CD8-positive, alpha-beta T cell (primary cell): ENCODE measurements at regions of chr17 and their contacts with region 1.

Region 1: DNA sequence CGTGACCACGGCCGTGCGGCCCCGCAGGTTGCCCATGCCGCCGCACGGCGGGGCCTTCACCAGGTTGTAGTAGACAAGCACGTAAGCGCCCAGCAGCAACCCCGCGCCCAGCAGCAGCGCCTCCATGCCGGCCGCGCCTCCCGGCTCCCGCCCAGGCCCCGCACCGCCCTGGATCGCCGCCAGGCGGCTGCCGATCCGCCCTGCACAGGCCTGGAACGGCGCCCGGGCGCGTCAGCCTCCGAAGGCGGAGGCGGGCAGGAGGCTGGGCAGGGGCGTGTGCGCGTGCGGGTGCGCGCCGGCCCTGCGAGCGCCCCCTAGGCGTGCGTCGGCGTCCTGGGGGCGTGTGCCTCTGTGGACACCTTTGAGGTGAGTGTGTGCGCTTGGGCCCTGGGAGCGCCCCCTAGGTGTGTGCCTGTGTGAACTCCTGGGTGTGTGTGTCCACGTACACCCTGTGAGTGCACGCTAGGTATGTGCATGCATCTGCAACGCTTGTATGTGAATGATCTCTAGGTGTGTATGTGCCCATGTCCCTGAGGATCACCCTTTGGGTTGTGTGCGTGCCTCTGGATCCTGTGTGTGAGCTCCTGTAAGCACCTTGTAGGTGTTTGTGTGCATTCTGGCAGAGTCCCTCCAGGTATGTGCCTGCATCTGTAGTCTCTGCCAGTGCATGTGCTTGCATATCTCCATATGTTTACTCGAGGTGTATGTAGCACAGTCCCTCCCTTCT is at the start of gene DHRS13:
- DNase-seq: peak; percentile 87 to 98 (median 95)
- ATAC-seq: peak; percentile 93
- H3K4me3 ChIP-seq: peak within 1 kb of the TSS; percentile 71 to 72
- H3K4me3 Mint-ChIP-seq: peak within 1 kb of the TSS; percentile 93
- H3K27ac ChIP-seq: peak within 1 kb of the TSS; percentile 61 to 62
- H3K27ac Mint-ChIP-seq: peak within 1 kb of the TSS; percentile 90
- H3K4me1 ChIP-seq: peaks cover 31% of the 10 kb centered on the region
- H3K4me1 Mint-ChIP-seq: peaks cover 33% of the 10 kb centered on the region
- H3K27me3 ChIP-seq: no peaks in the 10 kb centered on the region
- H3K27me3 Mint-ChIP-seq: no peaks in the 10 kb centered on the region
- CTCF ChIP-seq: peak; percentile 100
- total RNA-seq, gene DHRS13: 27.3 to 30.9 TPM

Region 2: GRCh38 chr17:28684963-28685362 is 218.0 kb before region 1 on chr17:
- CTCF ChIA-PET with region 1: no interaction called
- POLR2A ChIA-PET with region 1: no interaction called
- intact Hi-C with region 1: no loop called
- DNase-seq: no peak
- ATAC-seq: no peak
- H3K4me3 ChIP-seq: no peak overlapping the region
- H3K4me3 Mint-ChIP-seq: no peak overlapping the region
- H3K27ac ChIP-seq: no peak overlapping the region
- H3K27ac Mint-ChIP-seq: no peak overlapping the region
- H3K4me1 ChIP-seq: no peaks in the 10 kb centered on the region
- H3K4me1 Mint-ChIP-seq: no peaks in the 10 kb centered on the region
- H3K27me3 ChIP-seq: no peaks in the 10 kb centered on the region
- H3K27me3 Mint-ChIP-seq: no peaks in the 10 kb centered on the region
- CTCF ChIP-seq: no peak

Region 3: GRCh38 chr17:28717578-28718333 is 185.2 kb before region 1 on chr17 and contains the start of gene RAB34:
- CTCF ChIA-PET with region 1: interaction called, 5 read pairs
- POLR2A ChIA-PET with region 1: interaction called, 9 read pairs
- intact Hi-C with region 1: loop called in 1 of 2 experiments (anchors 2 kb)
- DNase-seq: peak in 4 of 9 experiments; percentile 22 to 53 (median 33)
- ATAC-seq: no peak
- H3K4me3 ChIP-seq: no peak within 1 kb of the TSS
- H3K4me3 Mint-ChIP-seq: peak within 1 kb of the TSS; percentile 59
- H3K27ac ChIP-seq: no peak within 1 kb of the TSS
- H3K27ac Mint-ChIP-seq: peak within 1 kb of the TSS; percentile 55
- H3K4me1 ChIP-seq: peaks cover 28% of the 10 kb centered on the region
- H3K4me1 Mint-ChIP-seq: peaks cover 39% of the 10 kb centered on the region
- H3K27me3 ChIP-seq: peaks cover 0 to 12% of the 10 kb centered on the region in 2 experiments
- H3K27me3 Mint-ChIP-seq: peaks cover 16% of the 10 kb centered on the region
- CTCF ChIP-seq: no peak
- total RNA-seq, gene RAB34: 13.9 to 14.1 TPM

Region 4: GRCh38 chr17:28842282-28843012 is 60.5 kb before region 1 on chr17 and contains the start of gene FAM222B:
- CTCF ChIA-PET with region 1: interaction called, 8 read pairs
- POLR2A ChIA-PET with region 1: interaction called, 11 read pairs
- intact Hi-C with region 1: loop called (anchors 1 kb)
- DNase-seq: peak; percentile 68 to 94 (median 83)
- ATAC-seq: peak; percentile 98
- H3K4me3 ChIP-seq: peak within 1 kb of the TSS; percentile 62 to 91
- H3K4me3 Mint-ChIP-seq: peak within 1 kb of the TSS; percentile 97
- H3K27ac ChIP-seq: peak within 1 kb of the TSS; percentile 65 to 79
- H3K27ac Mint-ChIP-seq: peak within 1 kb of the TSS; percentile 94
- H3K4me1 ChIP-seq: peaks cover 16% of the 10 kb centered on the region
- H3K4me1 Mint-ChIP-seq: peaks cover 25% of the 10 kb centered on the region
- H3K27me3 ChIP-seq: no peaks in the 10 kb centered on the region
- H3K27me3 Mint-ChIP-seq: no peaks in the 10 kb centered on the region
- CTCF ChIP-seq: no peak
- total RNA-seq, gene FAM222B: 20.2 to 20.6 TPM

Region 5: GRCh38 chr17:28854457-28855350 is 48.3 kb before region 1 on chr17 and contains the start of gene ERAL1:
- CTCF ChIA-PET with region 1: interaction called, 7 read pairs
- POLR2A ChIA-PET with region 1: interaction called, 5 read pairs
- intact Hi-C with region 1: loop called (anchors 1 to 2 kb)
- DNase-seq: peak; percentile 62 to 90 (median 84)
- ATAC-seq: peak; percentile 99
- H3K4me3 ChIP-seq: peak within 1 kb of the TSS; percentile 75 to 96
- H3K4me3 Mint-ChIP-seq: peak within 1 kb of the TSS; percentile 95
- H3K27ac ChIP-seq: peak within 1 kb of the TSS; percentile 61 to 74
- H3K27ac Mint-ChIP-seq: peak within 1 kb of the TSS; percentile 90
- H3K4me1 ChIP-seq: peaks cover 12% of the 10 kb centered on the region
- H3K4me1 Mint-ChIP-seq: peaks cover 18% of the 10 kb centered on the region
- H3K27me3 ChIP-seq: no peaks in the 10 kb centered on the region
- H3K27me3 Mint-ChIP-seq: no peaks in the 10 kb centered on the region
- CTCF ChIP-seq: no peak
- total RNA-seq, gene ERAL1: 20.0 to 21.2 TPM

Region 6: DNA sequence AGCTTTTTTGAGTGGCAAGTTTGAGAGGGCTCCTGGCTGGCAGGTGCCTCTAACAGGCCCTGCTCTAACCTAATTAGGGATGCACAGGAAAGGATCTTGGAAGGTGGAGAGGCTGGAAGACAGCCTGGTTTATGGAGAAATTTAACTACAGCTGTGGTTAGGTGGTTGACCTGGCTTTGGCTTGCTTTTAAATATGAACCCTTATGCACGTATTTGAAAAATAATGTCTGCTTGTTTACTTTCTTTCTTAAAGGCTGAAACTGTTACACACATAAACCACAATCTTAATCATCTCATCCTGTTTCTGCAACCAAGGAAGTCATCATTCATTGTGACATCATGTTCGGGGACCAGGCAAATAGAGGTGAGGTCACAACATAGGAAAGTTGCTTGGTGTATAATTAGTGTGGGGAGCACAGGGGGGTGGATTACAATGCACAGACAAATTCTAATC is 23.0 kb after region 1 on chr17:
- CTCF ChIA-PET with region 1: interaction called, 7 read pairs
- POLR2A ChIA-PET with region 1: no interaction called
- intact Hi-C with region 1: loop called (anchors 1 kb)
- DNase-seq: peak; percentile 31 to 96 (median 58)
- ATAC-seq: peak; percentile 90
- H3K4me3 ChIP-seq: no peak overlapping the region
- H3K4me3 Mint-ChIP-seq: peak overlapping the region; percentile 32
- H3K27ac ChIP-seq: peak overlapping the region; percentile 87 to 96
- H3K27ac Mint-ChIP-seq: peak overlapping the region; percentile 97
- H3K4me1 ChIP-seq: peaks cover 35% of the 10 kb centered on the region
- H3K4me1 Mint-ChIP-seq: peaks cover 60% of the 10 kb centered on the region
- H3K27me3 ChIP-seq: no peaks in the 10 kb centered on the region
- H3K27me3 Mint-ChIP-seq: no peaks in the 10 kb centered on the region
- CTCF ChIP-seq: no peak